Activated CD4-positive, alpha-beta T cell treated with anti-CD3 and anti-CD28 coated beads, Interleukin-2, amount 10 ng/mL, durations not matched to agents 24 days and 14 days (primary cell): ENCODE measurements at regions of chr3 and their contacts with region 1.

Region 1: GRCh38 chr3:196684548-196685407 is 27.3 kb downstream of the CEP19 start:
- DNase-seq: peak; percentile 91
- H3K4me3 Mint-ChIP-seq: peak overlapping the region; percentile 48
- H3K27ac Mint-ChIP-seq: peak overlapping the region; percentile 49
- H3K4me1 Mint-ChIP-seq: peaks cover 20% of the 10 kb centered on the region
- H3K27me3 Mint-ChIP-seq: no peaks in the 10 kb centered on the region

Region 2: DNA sequence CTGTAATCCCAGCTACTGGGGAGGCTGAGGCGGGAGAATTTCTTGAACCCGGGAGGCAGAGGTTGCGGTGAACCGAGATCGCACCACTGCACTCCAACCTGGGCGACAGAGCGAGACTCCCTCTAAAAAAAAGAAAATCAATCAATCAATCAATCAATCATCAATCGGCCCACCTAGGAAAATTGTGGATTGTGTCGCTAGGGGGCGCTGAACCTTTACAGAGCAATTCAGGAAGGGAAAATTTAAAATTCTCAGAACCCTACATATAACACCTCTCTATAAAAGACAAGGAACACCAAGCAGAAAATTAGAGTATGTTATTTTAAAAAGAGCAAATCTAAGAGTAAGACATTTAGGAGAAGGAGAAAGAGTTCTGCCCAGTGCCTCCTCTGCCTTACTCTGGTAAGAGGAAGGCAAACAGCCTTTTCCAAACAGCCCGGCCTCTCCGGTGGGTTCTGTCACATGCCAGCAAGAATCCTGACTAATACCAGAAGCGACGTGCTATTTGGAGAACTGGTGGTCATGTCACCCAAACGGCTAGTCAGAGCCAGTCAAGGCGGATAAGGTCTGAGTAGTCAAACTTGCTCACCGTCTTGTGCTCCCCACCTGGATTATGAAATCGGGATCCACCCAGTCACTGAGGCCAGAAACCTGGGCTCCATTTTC is 147.3 kb before region 1 on chr3:
- intact Hi-C with region 1: loop called (anchors 1 kb)
- DNase-seq: peak; percentile 89
- H3K4me3 Mint-ChIP-seq: no peak overlapping the region
- H3K27ac Mint-ChIP-seq: no peak overlapping the region
- H3K4me1 Mint-ChIP-seq: peaks cover 3% of the 10 kb centered on the region
- H3K27me3 Mint-ChIP-seq: peaks cover 8% of the 10 kb centered on the region

Region 3: DNA sequence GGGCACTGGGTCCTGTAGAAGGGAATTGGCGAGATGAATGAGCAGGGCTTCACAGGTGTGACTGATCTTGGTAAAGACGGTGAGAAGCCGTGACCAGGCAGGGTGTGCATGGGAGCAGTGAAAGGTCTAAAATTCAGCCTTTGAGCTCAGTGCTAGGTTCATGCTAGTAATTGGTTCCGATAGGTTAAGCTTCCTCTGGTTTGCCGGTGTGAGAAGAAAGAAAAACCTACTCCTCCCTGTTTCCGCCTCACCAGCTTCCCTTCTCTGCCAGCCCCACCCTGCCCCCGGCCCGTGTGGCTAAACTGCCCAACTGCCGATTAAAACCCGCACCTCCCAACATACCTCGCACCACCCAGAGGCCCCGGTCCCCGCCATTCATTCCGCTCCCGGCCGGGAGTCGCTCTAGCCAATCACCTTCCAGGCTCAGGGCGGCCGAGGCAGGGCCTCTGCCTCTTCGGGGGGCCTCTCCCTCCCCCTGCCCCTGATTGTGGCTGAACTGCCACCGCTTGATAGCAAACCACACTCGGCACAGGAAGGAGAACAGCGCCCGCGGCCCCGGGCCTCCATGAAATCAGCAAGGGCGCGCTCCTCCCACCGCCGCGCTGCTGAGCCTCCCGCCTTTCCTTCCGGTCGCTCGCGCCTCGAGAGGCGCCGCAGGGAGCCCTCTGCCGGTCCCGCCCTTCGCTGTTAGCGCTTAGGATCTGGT is 52.6 kb before region 1 on chr3:
- intact Hi-C with region 1: loop called (anchors 2 kb)
- DNase-seq: peak; percentile 97
- H3K4me3 Mint-ChIP-seq: peak overlapping the region; percentile 92
- H3K27ac Mint-ChIP-seq: peak overlapping the region; percentile 97
- H3K4me1 Mint-ChIP-seq: peaks cover 52% of the 10 kb centered on the region
- H3K27me3 Mint-ChIP-seq: no peaks in the 10 kb centered on the region